A549 (cell line): ENCODE measurements at regions of chr1 and their contacts with region 1.

Region 1: DNA sequence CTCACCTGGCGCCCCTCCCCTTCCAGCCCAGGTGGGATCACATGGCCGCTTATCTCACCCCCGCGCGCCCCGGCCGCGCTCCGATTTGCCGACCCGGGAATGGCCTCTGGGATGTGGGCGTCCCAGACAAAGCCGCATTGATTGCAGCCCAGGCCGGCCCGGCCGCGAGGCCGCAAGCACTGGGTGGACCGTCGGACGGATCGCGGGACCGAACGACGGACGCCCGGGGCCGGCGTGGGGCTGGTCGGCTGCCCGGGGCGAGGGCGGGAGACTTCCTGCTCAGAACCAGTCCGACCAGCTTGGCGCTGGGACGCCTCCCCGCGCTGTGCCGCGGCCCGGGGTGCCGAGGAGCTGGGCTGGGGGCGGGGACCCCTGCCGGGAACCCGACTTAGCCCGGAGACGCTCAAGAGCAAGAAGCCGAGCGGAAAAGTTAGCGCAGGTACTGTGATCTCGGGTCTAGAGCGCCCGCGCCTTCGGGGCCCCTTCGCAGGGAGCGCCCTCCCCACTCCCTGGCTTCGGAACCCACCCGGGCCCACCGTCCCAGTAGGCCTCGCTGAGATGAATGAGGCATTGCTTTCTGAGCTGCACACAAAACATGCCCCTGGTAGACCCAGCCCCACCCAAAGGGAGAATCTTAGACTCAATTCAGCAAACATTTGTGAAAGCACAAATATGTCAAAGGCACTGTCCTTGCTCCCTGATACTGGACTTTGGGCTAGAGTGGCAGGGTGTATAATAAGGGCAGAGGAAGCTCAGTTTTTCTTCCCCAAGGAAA is 415 bp upstream of the LAD1 start:
- DNase-seq: no peak
- ATAC-seq: no peak
- H3K4me3 ChIP-seq: no peak overlapping the region
- H3K27ac ChIP-seq: peak overlapping the region; percentile 90 to 92
- H3K4me1 ChIP-seq: peaks cover 75% of the 10 kb centered on the region
- CTCF ChIP-seq: no peak
- EP300 ChIP-seq: no peak
- POLR2A ChIP-seq: no peak
- RAD21 ChIP-seq: no peak

Region 2: DNA sequence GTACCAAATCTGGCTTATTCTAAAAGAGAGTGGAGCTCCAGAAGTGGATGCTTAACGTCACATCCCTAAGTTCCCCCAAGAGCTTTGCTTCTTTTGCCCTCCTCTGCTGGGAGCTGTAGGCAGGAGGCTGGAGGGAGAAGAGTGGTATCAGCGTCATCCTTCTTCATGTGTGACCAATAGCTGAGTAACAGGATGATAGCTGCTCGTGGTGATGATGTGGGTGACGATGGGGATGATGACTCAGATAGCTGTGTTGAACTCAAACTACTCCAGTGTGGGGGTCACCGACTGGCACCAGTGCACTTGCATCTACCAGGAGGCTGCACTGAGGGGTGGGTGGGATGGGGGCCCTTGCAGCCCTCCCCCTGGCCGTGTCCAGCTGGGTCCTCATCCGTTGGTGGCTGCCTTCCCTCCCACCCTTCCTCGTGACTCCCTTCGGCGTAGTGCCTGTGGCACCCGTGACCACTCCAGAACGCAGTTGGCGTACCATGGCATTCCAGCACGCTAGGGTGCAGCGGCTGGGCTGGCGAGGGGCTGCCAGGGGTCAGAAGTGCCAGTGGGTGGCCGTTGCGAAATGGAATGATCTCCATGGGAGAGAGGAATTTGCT is 207.8 kb before region 1 on chr1:
- CTCF ChIA-PET with region 1: no interaction called
- POLR2A ChIA-PET with region 1: no interaction called
- DNase-seq: peak; percentile 53 to 69
- ATAC-seq: peak; percentile 86 to 96
- H3K4me3 ChIP-seq: no peak overlapping the region
- H3K27ac ChIP-seq: peak overlapping the region in 1 of 2 experiments; percentile 78; a peak in 3 of 6 replicates
- H3K4me1 ChIP-seq: peaks cover 10% of the 10 kb centered on the region; the same call in 2 of the 3 replicates
- CTCF ChIP-seq: no peak
- EP300 ChIP-seq: no peak
- POLR2A ChIP-seq: no peak
- RAD21 ChIP-seq: no peak

Region 3: DNA sequence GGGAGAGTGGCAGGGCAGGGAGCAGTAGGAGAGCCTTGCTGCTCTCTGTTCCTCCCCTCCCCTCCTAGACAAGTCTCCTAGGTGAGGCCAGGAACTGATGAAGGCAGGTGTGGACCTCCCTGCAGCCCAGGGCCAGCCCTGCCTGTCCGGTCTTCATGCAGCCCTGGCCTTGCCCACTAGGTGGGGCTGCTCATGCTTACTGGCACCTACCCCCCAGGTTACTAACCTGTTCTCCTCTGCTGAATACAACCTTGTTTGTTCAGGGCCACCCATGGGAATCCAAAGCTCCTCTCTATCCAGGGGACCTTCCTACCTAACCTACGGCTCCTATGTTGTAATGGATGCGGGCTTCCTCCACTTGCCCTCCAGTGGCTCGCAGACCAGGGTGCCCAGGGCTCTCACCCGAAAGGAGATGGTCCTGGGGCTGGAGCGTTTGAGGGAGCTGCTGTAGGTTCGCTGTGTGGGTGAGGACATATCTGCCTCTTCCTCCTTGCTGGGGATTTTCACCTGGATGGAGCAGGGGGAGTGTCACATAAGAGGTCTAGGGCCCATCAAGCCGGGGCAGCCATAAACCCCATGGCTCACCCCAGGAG is 14.1 kb before region 1 on chr1:
- CTCF ChIA-PET with region 1: interaction called, 334 read pairs
- POLR2A ChIA-PET with region 1: no interaction called
- DNase-seq: peak; percentile 61 to 76
- ATAC-seq: peak; percentile 85 to 95
- H3K4me3 ChIP-seq: no peak overlapping the region
- H3K27ac ChIP-seq: peak overlapping the region; percentile 63 to 77
- H3K4me1 ChIP-seq: peaks cover 32% of the 10 kb centered on the region
- CTCF ChIP-seq: peak; percentile 93
- EP300 ChIP-seq: no peak
- POLR2A ChIP-seq: no peak
- RAD21 ChIP-seq: peak; percentile 81 to 84

Region 4: DNA sequence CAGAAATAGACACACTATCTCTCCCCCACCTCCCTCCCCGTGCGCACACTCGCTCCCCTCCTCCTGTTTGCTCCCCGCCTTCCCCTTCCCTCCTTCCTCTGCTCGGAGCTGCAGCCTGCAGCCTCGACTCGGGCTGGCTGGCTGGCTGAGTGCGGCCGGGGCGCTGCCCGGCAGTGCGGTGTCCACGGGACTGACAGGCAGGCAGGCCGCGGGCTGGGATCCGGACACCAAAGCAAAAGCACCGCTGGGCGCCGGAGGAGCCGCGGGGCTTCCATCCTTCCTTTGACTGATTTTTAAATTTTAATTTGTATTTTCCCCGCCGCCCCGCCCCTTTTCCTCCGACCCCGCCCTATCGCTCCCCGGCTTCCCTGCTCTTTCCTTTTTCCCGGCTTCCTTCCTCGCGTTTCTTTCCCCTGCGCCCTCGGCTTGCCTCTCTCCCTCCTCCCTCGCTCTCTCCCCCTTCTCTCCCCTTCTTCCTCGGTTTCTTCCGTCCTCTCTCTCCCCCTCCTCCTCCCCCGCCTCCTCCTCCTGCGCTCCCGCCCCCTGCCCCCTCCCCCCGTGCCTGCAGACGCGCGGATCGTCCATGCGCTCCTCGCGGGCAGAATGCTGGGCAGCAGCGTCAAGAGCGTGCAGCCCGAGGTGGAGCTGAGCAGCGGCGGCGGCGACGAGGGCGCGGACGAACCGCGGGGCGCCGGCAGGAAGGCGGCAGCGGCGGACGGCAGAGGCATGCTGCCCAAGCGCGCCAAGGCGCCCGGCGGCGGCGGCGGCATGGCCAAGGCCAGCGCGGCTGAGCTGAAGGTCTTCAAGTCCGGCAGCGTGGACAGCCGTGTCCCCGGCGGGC is 248.7 kb after region 1 on chr1:
- CTCF ChIA-PET with region 1: no interaction called
- POLR2A ChIA-PET with region 1: no interaction called
- DNase-seq: peak; percentile 46 to 64
- ATAC-seq: peak; percentile 67 to 69
- H3K4me3 ChIP-seq: peak overlapping the region; percentile 60
- H3K27ac ChIP-seq: peak overlapping the region; percentile 69 to 88
- H3K4me1 ChIP-seq: peaks cover 26% of the 10 kb centered on the region
- CTCF ChIP-seq: no peak
- EP300 ChIP-seq: no peak
- POLR2A ChIP-seq: peak; percentile 63
- RAD21 ChIP-seq: no peak